CD4-positive, alpha-beta T cell (primary cell): ENCODE measurements at regions of chr3 and their contacts with region 1.

Region 1: GRCh38 chr3:15098503-15099363 is at the start of gene RBSN:
- DNase-seq: peak; percentile 90 to 98 (median 94)
- ATAC-seq: peak; percentile 72
- H3K4me3 ChIP-seq: peak within 1 kb of the TSS; percentile 92
- H3K4me3 Mint-ChIP-seq: peak within 1 kb of the TSS; percentile 96
- H3K27ac ChIP-seq: peak within 1 kb of the TSS; percentile 96 to 98
- H3K27ac Mint-ChIP-seq: peak within 1 kb of the TSS; percentile 97
- H3K4me1 ChIP-seq: peaks cover 33% of the 10 kb centered on the region
- H3K4me1 Mint-ChIP-seq: peaks cover 36% of the 10 kb centered on the region
- H3K27me3 ChIP-seq: no peaks in the 10 kb centered on the region
- H3K27me3 Mint-ChIP-seq: peaks cover 5% of the 10 kb centered on the region
- CTCF ChIP-seq: no peak
- total RNA-seq, gene RBSN: 57.2 to 57.9 TPM

Region 2: GRCh38 chr3:14549256-14549931 is 549.3 kb before region 1 on chr3:
- CTCF ChIA-PET with region 1: no interaction called
- POLR2A ChIA-PET with region 1: no interaction called
- intact Hi-C with region 1: no loop called
- DNase-seq: no peak
- ATAC-seq: peak; percentile 37
- H3K4me3 ChIP-seq: no peak overlapping the region
- H3K4me3 Mint-ChIP-seq: no peak overlapping the region
- H3K27ac ChIP-seq: no peak overlapping the region
- H3K27ac Mint-ChIP-seq: no peak overlapping the region
- H3K4me1 ChIP-seq: no peaks in the 10 kb centered on the region
- H3K4me1 Mint-ChIP-seq: no peaks in the 10 kb centered on the region
- H3K27me3 ChIP-seq: peaks cover 5 to 12% of the 10 kb centered on the region in 2 experiments
- H3K27me3 Mint-ChIP-seq: peaks cover 64% of the 10 kb centered on the region
- CTCF ChIP-seq: no peak

Region 3: DNA sequence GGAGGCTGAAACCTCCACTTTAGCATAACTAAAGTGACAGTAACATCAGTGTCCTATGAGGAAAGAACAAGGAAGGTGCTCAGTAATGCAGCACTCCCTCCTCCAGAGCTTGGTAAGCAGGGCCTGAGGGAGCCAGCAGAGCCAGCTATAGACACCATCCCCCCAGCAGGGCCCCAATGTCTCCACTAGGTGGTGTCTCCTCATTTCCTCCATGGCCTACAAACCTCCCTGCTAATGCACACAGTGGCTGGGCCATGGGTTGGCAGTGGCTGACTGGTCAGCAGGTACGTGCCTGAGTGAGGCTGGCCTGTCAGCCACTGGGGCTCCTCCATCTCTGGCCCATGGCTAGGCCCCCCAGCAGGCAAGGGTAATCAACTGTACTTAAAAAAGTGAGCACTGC is 47.2 kb before region 1 on chr3:
- CTCF ChIA-PET with region 1: interaction called, 4 read pairs
- POLR2A ChIA-PET with region 1: interaction called, 3 read pairs
- intact Hi-C with region 1: loop called in 1 of 2 experiments (anchors 5 kb)
- DNase-seq: peak in 10 of 14 experiments; percentile 25 to 63 (median 36)
- ATAC-seq: peak; percentile 85
- H3K4me3 ChIP-seq: no peak overlapping the region
- H3K4me3 Mint-ChIP-seq: no peak overlapping the region
- H3K27ac ChIP-seq: no peak overlapping the region
- H3K27ac Mint-ChIP-seq: peak overlapping the region; percentile 64
- H3K4me1 ChIP-seq: peaks cover 20% of the 10 kb centered on the region
- H3K4me1 Mint-ChIP-seq: peaks cover 32% of the 10 kb centered on the region
- H3K27me3 ChIP-seq: no peaks in the 10 kb centered on the region
- H3K27me3 Mint-ChIP-seq: no peaks in the 10 kb centered on the region
- CTCF ChIP-seq: peak; percentile 47

Region 4: GRCh38 chr3:15064835-15065549 is 33.7 kb before region 1 on chr3 and contains the start of gene MRPS25:
- CTCF ChIA-PET with region 1: interaction called, 3 read pairs
- POLR2A ChIA-PET with region 1: interaction called, 31 read pairs
- intact Hi-C with region 1: loop called (anchors 1 kb)
- DNase-seq: peak; percentile 79 to 95 (median 85)
- ATAC-seq: peak; percentile 98
- H3K4me3 ChIP-seq: peak within 1 kb of the TSS; percentile 88
- H3K4me3 Mint-ChIP-seq: peak within 1 kb of the TSS; percentile 98
- H3K27ac ChIP-seq: peak within 1 kb of the TSS; percentile 61 to 77
- H3K27ac Mint-ChIP-seq: peak within 1 kb of the TSS; percentile 92
- H3K4me1 ChIP-seq: peaks cover 32% of the 10 kb centered on the region
- H3K4me1 Mint-ChIP-seq: peaks cover 25% of the 10 kb centered on the region
- H3K27me3 ChIP-seq: no peaks in the 10 kb centered on the region
- H3K27me3 Mint-ChIP-seq: no peaks in the 10 kb centered on the region
- CTCF ChIP-seq: no peak
- total RNA-seq, gene MRPS25: 59.9 to 60.2 TPM

Region 5: GRCh38 chr3:15258720-15259119 is 160.0 kb after region 1 on chr3:
- CTCF ChIA-PET with region 1: no interaction called
- POLR2A ChIA-PET with region 1: no interaction called
- intact Hi-C with region 1: no loop called
- DNase-seq: no peak
- ATAC-seq: no peak
- H3K4me3 ChIP-seq: no peak overlapping the region
- H3K4me3 Mint-ChIP-seq: no peak overlapping the region
- H3K27ac ChIP-seq: no peak overlapping the region
- H3K27ac Mint-ChIP-seq: peak overlapping the region; percentile 75
- H3K4me1 ChIP-seq: peaks cover 5% of the 10 kb centered on the region
- H3K4me1 Mint-ChIP-seq: peaks cover 20% of the 10 kb centered on the region
- H3K27me3 ChIP-seq: no peaks in the 10 kb centered on the region
- H3K27me3 Mint-ChIP-seq: no peaks in the 10 kb centered on the region
- CTCF ChIP-seq: no peak

Region 6: GRCh38 chr3:15527031-15527459 is 428.3 kb after region 1 on chr3:
- CTCF ChIA-PET with region 1: no interaction called
- POLR2A ChIA-PET with region 1: no interaction called
- intact Hi-C with region 1: no loop called
- DNase-seq: no peak
- ATAC-seq: no peak
- H3K4me3 ChIP-seq: no peak overlapping the region
- H3K4me3 Mint-ChIP-seq: no peak overlapping the region
- H3K27ac ChIP-seq: no peak overlapping the region
- H3K27ac Mint-ChIP-seq: no peak overlapping the region
- H3K4me1 ChIP-seq: peaks cover 43% of the 10 kb centered on the region
- H3K4me1 Mint-ChIP-seq: peaks cover 25% of the 10 kb centered on the region
- H3K27me3 ChIP-seq: no peaks in the 10 kb centered on the region
- H3K27me3 Mint-ChIP-seq: no peaks in the 10 kb centered on the region
- CTCF ChIP-seq: no peak